Left ventricle myocardium superior (tissue), 1 donor: ENCODE measurements at regions of chr1 and their contacts with region 1.

Region 1: GRCh38 chr1:192477630-192478029 is 97.9 kb upstream of the RGS1 start:
- DNase-seq: no peak
- ATAC-seq: peak; percentile 71

Region 2: DNA sequence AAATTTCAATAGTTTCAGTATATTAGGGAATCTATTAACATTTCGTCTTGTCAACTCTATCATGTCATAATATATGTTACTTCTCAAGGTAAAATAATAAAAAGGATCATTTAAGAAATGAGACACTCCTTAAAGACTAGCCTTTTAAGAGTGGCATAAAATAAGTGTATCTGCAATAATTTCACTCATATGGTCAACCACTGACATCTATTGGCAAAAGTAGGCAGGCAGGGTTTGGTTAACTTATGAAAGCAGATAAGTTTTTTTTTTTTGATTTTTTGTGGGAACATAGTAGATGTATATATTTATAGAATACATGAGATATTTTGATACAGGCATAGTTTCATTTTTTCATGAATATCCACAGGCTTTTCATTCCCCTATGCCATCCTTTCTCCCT is 166.3 kb before region 1 on chr1:
- intact Hi-C with region 1: no loop called
- DNase-seq: no peak
- ATAC-seq: no peak

Region 3: GRCh38 chr1:192401825-192402224 is 75.8 kb before region 1 on chr1:
- intact Hi-C with region 1: no loop called
- DNase-seq: no peak
- ATAC-seq: no peak

Region 4: DNA sequence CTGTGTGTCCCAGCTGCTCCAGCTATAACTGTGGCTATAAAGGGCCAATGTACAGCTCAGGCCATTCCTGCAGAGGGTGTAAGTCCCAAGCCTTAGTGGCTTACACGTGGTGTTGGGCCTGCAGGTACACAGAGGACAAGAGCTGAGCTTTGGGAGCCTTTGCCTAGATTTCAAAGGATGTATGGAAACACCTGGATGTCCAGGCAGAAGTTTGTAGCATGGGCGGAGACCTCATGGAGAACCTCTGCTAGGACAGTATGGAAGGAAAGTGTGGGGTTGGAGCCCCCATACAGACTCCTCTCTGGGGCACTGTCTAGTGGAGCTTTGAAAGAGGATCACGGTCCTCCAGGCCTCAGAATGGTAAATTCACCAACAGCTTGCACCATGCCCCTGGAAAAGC is 47.0 kb before region 1 on chr1:
- intact Hi-C with region 1: no loop called
- DNase-seq: no peak
- ATAC-seq: no peak

Region 5: DNA sequence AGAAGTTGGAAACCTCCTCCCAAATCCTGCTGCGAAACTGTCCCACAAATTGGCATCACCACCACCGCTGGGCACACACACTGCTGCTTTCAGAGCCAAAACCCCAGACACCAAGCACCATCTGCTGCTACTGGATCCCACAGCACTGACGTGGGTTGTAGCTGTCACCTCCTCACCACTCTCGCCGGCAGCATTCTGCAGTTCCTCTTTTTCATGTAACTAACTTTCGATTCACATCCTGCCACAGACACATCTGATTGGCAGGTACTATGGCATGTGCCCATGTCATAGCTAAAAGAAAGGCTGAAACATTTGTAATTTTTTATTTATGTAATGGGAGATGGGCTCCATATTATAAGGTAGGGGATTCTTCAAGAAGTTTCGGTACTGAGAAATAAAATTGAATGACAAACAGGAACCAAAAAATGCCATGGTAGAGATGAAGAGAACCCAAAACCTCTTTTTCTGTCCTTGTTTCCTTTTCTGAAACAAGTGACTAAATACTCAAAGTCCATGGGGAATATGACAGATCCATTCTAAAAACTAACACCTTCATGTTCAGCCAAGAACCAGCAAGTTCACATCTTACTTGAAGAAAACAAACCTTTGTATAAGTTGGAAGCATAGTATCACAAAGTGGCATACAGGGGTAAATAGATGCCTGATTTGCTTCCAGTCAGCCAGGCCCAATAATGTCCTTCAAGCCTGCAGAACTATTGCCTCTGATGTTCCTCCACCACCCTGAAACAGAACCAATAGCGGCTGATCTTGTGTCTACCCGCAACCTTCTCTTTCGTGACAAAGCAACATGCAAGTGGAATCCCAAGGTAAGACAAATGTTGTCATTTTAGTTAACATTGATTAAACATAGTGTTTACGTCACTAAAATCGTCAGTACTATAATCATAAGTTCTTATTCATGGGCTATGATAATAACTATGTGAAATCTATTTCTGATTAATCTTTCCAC is 131.8 kb after region 1 on chr1:
- intact Hi-C with region 1: loop called (anchors 5 kb)
- DNase-seq: peak; percentile 41
- ATAC-seq: peak; percentile 28

Region 6: GRCh38 chr1:193019442-193020026 is 541.9 kb after region 1 on chr1:
- intact Hi-C with region 1: loop called (anchors 5 kb)
- DNase-seq: no peak
- ATAC-seq: peak; percentile 51